A549 (cell line): ENCODE measurements at regions of chr9 and their contacts with region 1.

Region 1: GRCh38 chr9:33778700-33779351 is 16.5 kb upstream of the PRSS3 start:
- DNase-seq: peak; percentile 67 to 76
- ATAC-seq: peak; percentile 91 to 93
- H3K4me3 ChIP-seq: no peak overlapping the region
- H3K27ac ChIP-seq: peak overlapping the region; percentile 16 to 76; a peak in 3 of 6 replicates
- H3K4me1 ChIP-seq: peaks cover 40% of the 10 kb centered on the region
- CTCF ChIP-seq: peak; percentile 87
- EP300 ChIP-seq: no peak
- POLR2A ChIP-seq: no peak
- RAD21 ChIP-seq: peak; percentile 81 to 83

Region 2: DNA sequence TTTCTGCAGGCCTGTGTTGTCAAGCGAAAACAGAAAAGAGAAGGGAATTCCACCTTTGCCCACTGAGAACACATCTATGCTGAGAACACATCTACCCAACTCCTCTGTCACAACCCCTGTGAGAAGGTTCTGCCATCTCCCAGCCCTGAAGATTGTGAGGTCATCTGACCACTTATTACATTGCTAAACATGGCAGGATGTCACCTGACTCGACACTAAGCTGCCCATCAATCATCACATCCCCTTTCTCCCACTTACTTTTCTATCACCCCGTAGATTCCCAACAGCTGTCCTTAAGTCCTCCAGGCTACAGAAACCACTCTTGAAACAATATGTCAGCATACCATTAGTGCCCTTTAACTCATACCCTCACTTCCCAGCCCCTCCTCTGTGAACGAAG is 47.7 kb before region 1 on chr9:
- CTCF ChIA-PET with region 1: interaction called, 29 read pairs
- POLR2A ChIA-PET with region 1: no interaction called
- DNase-seq: no peak
- ATAC-seq: no peak
- H3K4me3 ChIP-seq: no peak overlapping the region
- H3K27ac ChIP-seq: no peak overlapping the region
- H3K4me1 ChIP-seq: 0 out of 3 replicates have a peak, but pooled peaks cover 5% of the 10 kb centered on the region
- CTCF ChIP-seq: no peak
- EP300 ChIP-seq: no peak
- POLR2A ChIP-seq: no peak
- RAD21 ChIP-seq: no peak

Region 3: DNA sequence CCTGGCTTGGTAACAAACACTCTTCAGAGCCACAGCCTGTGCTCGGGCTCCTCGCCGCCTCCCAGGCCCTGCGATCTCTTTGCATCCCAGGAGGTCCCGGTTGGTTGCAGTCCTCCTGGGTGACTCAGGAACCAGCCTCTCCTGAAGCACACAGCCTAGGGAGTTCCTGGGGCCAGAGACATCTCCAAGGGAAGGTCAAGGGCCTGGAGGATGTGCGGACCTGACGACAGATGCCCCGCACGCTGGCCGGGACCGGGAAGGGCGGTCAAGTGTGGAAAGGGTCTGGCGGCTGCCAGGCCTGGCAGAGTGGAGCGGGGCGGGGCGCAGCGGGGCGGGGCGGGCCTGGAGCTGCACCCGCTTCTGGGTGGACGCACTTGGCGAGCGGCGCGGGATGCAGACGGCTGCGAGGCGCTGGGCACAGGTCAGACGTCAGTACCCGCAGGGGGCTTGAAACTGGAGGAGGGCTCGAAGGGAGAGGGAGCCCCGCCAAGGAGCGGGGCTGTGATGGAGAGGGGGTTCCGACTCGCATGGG is 28.5 kb before region 1 on chr9:
- CTCF ChIA-PET with region 1: interaction called, 20 read pairs
- POLR2A ChIA-PET with region 1: no interaction called
- DNase-seq: peak; percentile 30 to 53
- ATAC-seq: peak; percentile 89 to 91
- H3K4me3 ChIP-seq: peak overlapping the region; percentile 50
- H3K27ac ChIP-seq: peak overlapping the region; percentile 61 to 79
- H3K4me1 ChIP-seq: peaks cover 35% of the 10 kb centered on the region
- CTCF ChIP-seq: no peak
- EP300 ChIP-seq: no peak
- POLR2A ChIP-seq: no peak
- RAD21 ChIP-seq: no peak

Region 4: DNA sequence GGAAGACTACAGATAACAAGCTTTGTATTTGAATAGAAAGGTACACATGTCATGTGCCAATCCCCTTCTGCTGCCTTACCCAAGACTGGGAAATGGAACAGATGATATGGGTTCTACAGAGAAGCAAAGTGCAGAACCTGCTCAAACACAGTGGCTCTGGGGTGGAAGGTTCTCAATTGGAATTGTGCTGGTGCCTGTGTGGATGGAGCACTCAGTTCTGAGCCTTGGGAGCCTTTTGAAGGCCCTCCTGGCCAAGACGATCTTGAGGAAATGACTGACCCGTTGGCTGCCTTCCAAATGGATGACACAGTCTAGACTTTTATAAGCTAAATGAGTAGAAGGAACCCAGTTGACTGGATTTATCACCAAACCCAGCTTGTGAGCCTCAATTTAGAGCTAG is 12.3 kb after region 1 on chr9:
- CTCF ChIA-PET with region 1: interaction called, 29 read pairs
- POLR2A ChIA-PET with region 1: no interaction called
- DNase-seq: peak in 1 of 2 experiments; percentile 68
- ATAC-seq: peak in 1 of 2 experiments; percentile 63; a peak in 3 of 6 replicates
- H3K4me3 ChIP-seq: no peak overlapping the region
- H3K27ac ChIP-seq: 0 out of 6 replicates have a peak overlapping the region, but pooled peaks of 1 of the 2 experiments have one; percentile 36
- H3K4me1 ChIP-seq: peaks cover 15% of the 10 kb centered on the region
- CTCF ChIP-seq: no peak
- EP300 ChIP-seq: no peak
- POLR2A ChIP-seq: no peak
- RAD21 ChIP-seq: no peak

Region 5: DNA sequence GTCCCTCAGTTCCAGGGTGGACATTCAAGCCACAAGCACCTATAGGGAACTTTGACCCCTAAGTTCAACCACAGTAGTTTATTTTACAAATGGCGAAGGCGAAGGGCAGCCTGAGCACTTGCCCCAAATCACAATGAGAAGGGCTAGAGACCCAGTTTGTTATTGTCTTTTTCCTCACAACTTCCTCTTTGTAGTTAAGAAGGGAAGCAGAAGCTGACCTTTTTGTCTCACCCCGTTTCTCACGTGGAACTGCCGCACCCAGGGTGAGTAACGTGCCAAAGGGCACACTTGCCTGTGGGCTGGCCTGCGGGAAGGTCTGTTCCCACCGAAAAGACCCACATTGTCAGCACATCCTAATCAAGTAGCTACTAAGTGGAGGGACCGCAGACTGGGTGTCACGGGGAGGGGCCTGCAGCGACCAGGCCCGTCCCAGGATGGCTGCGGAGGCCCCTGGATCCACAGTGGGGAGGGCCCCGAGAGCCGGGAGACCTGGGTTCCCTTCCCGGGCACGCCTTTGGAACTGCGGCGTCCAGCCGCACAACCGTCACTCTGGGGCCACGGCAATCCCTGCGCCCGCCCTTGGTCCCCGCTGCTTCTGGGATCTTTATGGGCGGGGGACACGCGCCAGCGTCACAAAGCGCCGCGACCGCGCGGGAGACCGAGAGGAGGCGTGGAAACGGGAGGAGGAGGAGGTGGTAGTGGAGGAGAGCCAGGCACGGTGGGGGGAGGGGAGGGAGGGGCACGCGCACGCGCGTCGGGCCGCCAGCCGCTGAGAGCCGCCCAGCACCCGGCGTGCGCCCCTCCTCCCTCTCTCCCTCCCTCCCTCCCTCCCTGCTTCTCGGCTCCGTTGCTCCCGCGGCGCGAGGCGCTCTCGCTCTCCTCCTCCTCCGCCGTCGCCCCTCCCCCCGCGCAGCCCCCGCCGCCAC is 37.8 kb after region 1 on chr9 and contains the start of gene UBE2R2:
- CTCF ChIA-PET with region 1: interaction called, 13 read pairs
- POLR2A ChIA-PET with region 1: no interaction called
- DNase-seq: peak; percentile 95
- ATAC-seq: peak; percentile 72 to 83
- H3K4me3 ChIP-seq: peak within 1 kb of the TSS; percentile 81
- H3K27ac ChIP-seq: peak within 1 kb of the TSS; percentile 99
- H3K4me1 ChIP-seq: peaks cover 55% of the 10 kb centered on the region
- CTCF ChIP-seq: no peak
- EP300 ChIP-seq: peak in 1 of 2 experiments; percentile 12; a peak in 1 of 5 replicates
- POLR2A ChIP-seq: peak; percentile 53
- RAD21 ChIP-seq: peak in 1 of 2 experiments; percentile 32; a peak in 1 of 5 replicates
- polyA plus RNA-seq, gene UBE2R2: 44.9 and 48.1 TPM in 2 replicates

Region 6: GRCh38 chr9:34072868-34073590 is 294.2 kb after region 1 on chr9:
- CTCF ChIA-PET with region 1: no interaction called
- POLR2A ChIA-PET with region 1: no interaction called
- DNase-seq: peak; percentile 87
- ATAC-seq: peak; percentile 85 to 93
- H3K4me3 ChIP-seq: no peak overlapping the region
- H3K27ac ChIP-seq: peak overlapping the region; percentile 61 to 78
- H3K4me1 ChIP-seq: peaks cover 22% of the 10 kb centered on the region
- CTCF ChIP-seq: no peak
- EP300 ChIP-seq: no peak; a peak in 1 of 5 replicates
- POLR2A ChIP-seq: no peak
- RAD21 ChIP-seq: no peak; a peak in 1 of 5 replicates